GM12878 (cell line): ENCODE measurements at regions of chr14 and their contacts with region 1.

Region 1: DNA sequence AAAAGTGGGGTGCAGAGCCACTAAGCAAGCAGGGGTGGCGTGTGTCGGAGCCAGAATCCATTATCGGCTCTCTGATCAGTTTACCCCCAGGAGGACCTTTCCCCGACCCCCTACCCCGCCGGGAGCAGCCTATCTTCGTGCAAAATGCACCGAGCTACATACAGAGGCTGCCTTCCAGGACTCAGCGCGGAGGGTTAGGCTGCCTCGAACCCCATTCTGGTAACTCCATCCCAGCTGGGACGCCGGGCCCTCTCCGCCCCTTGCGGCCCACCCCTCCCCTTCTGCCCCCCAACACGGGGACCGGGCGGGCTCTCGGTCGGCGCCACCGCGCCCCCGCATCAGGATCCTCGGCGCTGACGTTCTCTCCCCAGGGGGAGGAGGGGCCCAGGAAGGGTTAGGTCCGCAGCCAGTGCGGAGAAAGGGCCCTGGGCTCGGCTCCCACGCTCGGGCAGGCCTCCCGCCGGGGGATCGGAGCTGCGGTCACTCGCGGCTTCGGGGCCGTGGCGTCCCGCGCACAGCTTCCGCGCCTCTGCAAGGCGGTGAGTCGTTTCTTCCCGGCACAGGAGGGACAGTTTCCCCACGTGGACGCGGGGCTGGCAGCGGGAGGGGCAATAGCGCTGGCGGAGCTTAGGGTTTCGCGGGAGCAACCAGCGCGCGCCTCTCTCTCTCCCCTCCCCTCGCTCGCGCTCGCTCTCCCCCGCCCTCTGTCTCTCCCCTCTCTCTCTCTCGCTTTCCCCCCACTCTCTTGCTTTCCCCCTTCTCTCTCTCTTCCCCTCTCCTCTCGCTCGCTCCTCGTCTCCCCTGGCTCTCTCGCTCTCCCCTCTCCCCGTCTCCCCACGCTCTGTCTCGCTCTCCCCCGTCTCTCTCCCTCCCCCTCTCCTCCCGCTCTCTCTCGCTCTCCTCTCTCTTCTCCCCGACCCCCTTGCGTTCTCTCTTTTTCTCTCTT is 12.5 kb upstream of the MAP3K9 start:
- DNase-seq: no peak
- ATAC-seq: peak; percentile 67
- H3K4me3 ChIP-seq: peak overlapping the region; percentile 74
- H3K27ac ChIP-seq: no peak overlapping the region
- H3K4me1 ChIP-seq: peaks cover 4% of the 10 kb centered on the region; the same call in 1 of the 2 replicates
- H3K27me3 ChIP-seq: peaks cover 0 to 5% of the 10 kb centered on the region in 2 experiments; a peak in 1 of 4 replicates
- CTCF ChIP-seq: no peak
- EP300 ChIP-seq: no peak
- POLR2A ChIP-seq: peak; percentile 63
- RAD21 ChIP-seq: no peak

Region 2: DNA sequence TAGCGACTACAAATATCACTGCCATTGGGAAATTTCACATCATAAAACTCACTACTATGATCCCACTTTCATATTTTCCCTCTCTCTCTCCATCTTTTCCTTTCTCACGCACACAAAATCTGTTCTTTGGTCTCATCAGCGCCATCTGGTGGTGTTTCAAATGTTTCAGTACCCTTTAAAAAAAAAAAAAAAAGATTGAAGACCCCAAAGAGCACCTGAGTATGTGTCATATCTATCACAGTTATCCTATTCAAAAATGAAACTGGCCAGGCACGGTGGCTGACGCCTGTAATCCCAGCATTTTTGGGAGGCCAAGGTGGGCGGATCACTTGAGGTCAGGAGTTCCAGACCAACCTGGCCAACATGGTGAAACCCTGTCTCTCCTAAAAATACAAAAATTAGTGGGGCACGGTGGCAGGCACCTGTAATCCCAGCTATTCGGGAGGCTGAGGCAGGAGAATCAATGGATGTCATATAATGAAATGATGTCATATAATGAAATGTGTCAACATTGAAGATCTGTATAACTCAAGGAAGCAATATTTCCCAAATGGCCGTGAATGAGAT is 107.7 kb before region 1 on chr14:
- CTCF ChIA-PET with region 1: interaction called, 36 read pairs
- POLR2A ChIA-PET with region 1: no interaction called
- RAD21 ChIA-PET with region 1: interaction called, 16 read pairs
- SMC1A ChIA-PET with region 1: interaction called, 4 read pairs
- in situ Hi-C with region 1: no loop called
- intact Hi-C with region 1: loop called (anchors 1 kb)
- DNase-seq: peak; percentile 50
- ATAC-seq: peak; percentile 63
- H3K4me3 ChIP-seq: no peak overlapping the region; the same call in 1 of the 2 replicates
- H3K27ac ChIP-seq: peak overlapping the region; percentile 52; the same call in 1 of the 2 replicates
- H3K4me1 ChIP-seq: peaks cover 6% of the 10 kb centered on the region
- H3K27me3 ChIP-seq: no peaks in the 10 kb centered on the region
- CTCF ChIP-seq: peak; percentile 42 to 55 (median 51); a peak in 5 of 6 replicates
- EP300 ChIP-seq: no peak
- POLR2A ChIP-seq: no peak
- RAD21 ChIP-seq: peak; percentile 72

Region 3: GRCh38 chr14:70809543-70810244 is 12.2 kb before region 1 on chr14:
- CTCF ChIA-PET with region 1: interaction called, 25 read pairs
- POLR2A ChIA-PET with region 1: interaction called, 4 read pairs
- RAD21 ChIA-PET with region 1: interaction called, 21 read pairs
- SMC1A ChIA-PET with region 1: interaction called, 12 read pairs
- in situ Hi-C with region 1: no loop called
- intact Hi-C with region 1: no loop called
- DNase-seq: peak; percentile 89
- ATAC-seq: peak; percentile 93
- H3K4me3 ChIP-seq: peak overlapping the region; percentile 90
- H3K27ac ChIP-seq: peak overlapping the region; percentile 60
- H3K4me1 ChIP-seq: peaks cover 23% of the 10 kb centered on the region
- H3K27me3 ChIP-seq: no peaks in the 10 kb centered on the region
- CTCF ChIP-seq: no peak
- EP300 ChIP-seq: no peak
- POLR2A ChIP-seq: peak; percentile 52; the same call in 1 of the 2 replicates
- RAD21 ChIP-seq: no peak

Region 4: DNA sequence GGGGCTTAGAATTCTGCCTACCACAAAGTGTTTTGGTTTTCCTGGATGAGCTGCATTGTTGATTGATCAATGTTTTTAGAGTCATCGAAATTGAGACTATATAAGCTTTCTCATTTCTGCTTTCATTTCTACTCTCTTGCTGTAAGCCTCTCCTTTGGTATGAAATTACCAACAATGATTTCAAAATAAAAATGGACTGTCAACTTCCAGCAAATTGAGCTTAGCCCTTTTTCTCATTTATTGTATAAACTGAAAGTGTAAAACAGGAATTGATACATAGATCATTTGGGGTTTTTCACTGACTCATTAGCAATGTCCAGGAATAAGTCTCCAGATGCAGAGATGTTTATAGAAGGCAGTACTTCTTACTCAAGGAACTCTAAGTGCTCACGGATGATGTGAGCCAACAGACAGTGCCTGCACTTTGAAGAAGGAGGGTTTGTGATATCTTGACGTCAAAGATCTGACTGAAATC is 65.4 kb after region 1 on chr14:
- CTCF ChIA-PET with region 1: interaction called, 14 read pairs
- POLR2A ChIA-PET with region 1: interaction called, 5 read pairs
- RAD21 ChIA-PET with region 1: interaction called, 4 read pairs
- SMC1A ChIA-PET with region 1: interaction called, 13 read pairs
- in situ Hi-C with region 1: no loop called
- intact Hi-C with region 1: no loop called
- DNase-seq: peak; percentile 71
- ATAC-seq: peak; percentile 72
- H3K4me3 ChIP-seq: peak overlapping the region; percentile 56
- H3K27ac ChIP-seq: peak overlapping the region; percentile 98
- H3K4me1 ChIP-seq: peaks cover 65% of the 10 kb centered on the region
- H3K27me3 ChIP-seq: no peaks in the 10 kb centered on the region
- CTCF ChIP-seq: no peak
- EP300 ChIP-seq: peak in 1 of 2 experiments; percentile 54; a peak in 1 of 4 replicates
- POLR2A ChIP-seq: no peak
- RAD21 ChIP-seq: no peak

Region 5: DNA sequence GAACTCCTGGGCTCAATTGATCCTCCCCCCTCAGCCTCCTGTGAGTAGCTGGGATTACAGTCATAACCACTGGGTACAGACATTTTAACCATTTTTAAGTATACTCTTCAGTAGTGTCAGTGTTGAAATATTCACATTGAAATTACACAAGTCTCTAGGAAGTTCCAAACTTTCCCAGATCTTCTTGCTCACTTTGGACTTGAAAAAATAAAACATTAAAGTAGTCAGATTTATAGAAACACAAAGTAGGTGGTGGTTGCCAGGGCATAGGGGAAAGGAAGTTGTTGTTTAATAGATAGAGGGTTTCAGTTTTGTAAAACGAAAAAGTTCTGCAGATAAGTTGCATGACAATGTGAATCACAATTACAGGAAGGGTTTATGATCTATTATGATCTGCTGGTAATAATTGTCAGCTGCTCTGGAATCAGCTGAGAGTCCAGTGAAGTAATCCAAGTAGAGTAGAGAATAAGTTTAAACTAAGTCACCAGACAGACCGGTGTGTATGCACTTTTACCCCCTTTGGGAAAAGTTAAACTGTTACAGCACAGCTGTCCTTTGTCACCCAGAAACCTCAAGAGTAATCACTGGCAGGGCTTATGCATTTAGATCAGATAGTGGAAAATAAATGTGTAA is 112.8 kb after region 1 on chr14:
- CTCF ChIA-PET with region 1: interaction called, 13 read pairs
- POLR2A ChIA-PET with region 1: no interaction called
- RAD21 ChIA-PET with region 1: interaction called, 9 read pairs
- SMC1A ChIA-PET with region 1: interaction called, 6 read pairs
- in situ Hi-C with region 1: no loop called
- intact Hi-C with region 1: no loop called
- DNase-seq: peak; percentile 34
- ATAC-seq: peak; percentile 90
- H3K4me3 ChIP-seq: peak overlapping the region; percentile 38; the same call in 1 of the 2 replicates
- H3K27ac ChIP-seq: peak overlapping the region; percentile 56
- H3K4me1 ChIP-seq: peaks cover 14% of the 10 kb centered on the region; the same call in 1 of the 2 replicates
- H3K27me3 ChIP-seq: no peaks in the 10 kb centered on the region
- CTCF ChIP-seq: no peak
- EP300 ChIP-seq: no peak
- POLR2A ChIP-seq: no peak
- RAD21 ChIP-seq: no peak

Region 6: DNA sequence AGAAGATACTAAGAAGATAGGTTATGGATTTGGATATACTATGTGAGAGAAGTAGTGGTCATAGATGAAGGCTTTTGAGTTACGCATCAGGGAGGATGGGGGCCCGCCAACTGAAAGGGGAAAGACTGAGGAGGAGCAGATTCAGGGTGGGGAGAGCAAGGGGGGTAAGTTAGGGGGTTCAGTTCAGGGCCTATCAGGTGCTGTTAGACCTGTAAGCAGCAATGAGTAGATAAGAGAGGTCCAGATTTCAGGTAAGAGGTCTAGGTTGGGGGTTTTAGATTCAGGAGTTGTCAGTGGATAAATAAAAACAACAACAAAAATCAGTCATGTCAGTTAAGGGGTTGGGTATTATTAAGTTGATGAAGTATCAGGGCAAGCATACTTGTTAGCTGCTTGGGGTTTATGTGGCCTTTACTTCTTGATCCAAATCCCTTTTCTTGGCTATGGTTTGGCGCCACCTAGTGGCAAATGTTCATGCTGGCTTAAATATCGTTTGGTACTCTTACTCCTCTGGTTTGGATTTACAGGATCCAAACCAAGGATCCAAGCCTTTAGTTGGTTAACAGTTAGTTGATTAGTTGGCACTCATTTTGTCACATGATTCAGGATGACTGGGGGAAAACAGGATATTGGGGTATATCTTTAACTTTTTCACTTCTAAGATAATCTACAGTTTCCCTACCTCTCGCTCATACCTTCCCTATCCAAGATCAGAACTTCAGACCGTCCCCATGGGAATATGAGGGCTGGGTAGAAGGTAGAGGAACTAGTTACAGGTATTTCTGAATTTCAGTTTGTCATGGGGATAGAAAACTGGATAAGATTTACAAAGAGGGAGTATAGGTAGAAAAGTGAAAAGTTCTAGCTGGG is 150.5 kb after region 1 on chr14:
- CTCF ChIA-PET with region 1: interaction called, 58 read pairs
- POLR2A ChIA-PET with region 1: no interaction called
- RAD21 ChIA-PET with region 1: interaction called, 23 read pairs
- SMC1A ChIA-PET with region 1: interaction called, 35 read pairs
- in situ Hi-C with region 1: no loop called
- intact Hi-C with region 1: loop called (anchors 1 kb)
- DNase-seq: peak; percentile 44
- ATAC-seq: peak; percentile 94
- H3K4me3 ChIP-seq: no peak overlapping the region
- H3K27ac ChIP-seq: no peak overlapping the region
- H3K4me1 ChIP-seq: no peaks in the 10 kb centered on the region
- H3K27me3 ChIP-seq: no peaks in the 10 kb centered on the region
- CTCF ChIP-seq: peak; percentile 79 to 91 (median 83)
- EP300 ChIP-seq: no peak
- POLR2A ChIP-seq: no peak
- RAD21 ChIP-seq: peak; percentile 92

Region 7: GRCh38 chr14:71309753-71310152 is 487.9 kb after region 1 on chr14:
- CTCF ChIA-PET with region 1: no interaction called
- POLR2A ChIA-PET with region 1: no interaction called
- RAD21 ChIA-PET with region 1: no interaction called
- SMC1A ChIA-PET with region 1: no interaction called
- in situ Hi-C with region 1: no loop called
- intact Hi-C with region 1: no loop called
- DNase-seq: no peak
- ATAC-seq: no peak
- H3K4me3 ChIP-seq: no peak overlapping the region
- H3K27ac ChIP-seq: no peak overlapping the region
- H3K4me1 ChIP-seq: no peaks in the 10 kb centered on the region
- H3K27me3 ChIP-seq: no peaks in the 10 kb centered on the region
- CTCF ChIP-seq: no peak
- EP300 ChIP-seq: no peak
- POLR2A ChIP-seq: no peak
- RAD21 ChIP-seq: no peak; the same call in 1 of the 2 replicates